PC-3 (cell line): ENCODE measurements at regions of chr2 and their contacts with region 1.

Region 1: DNA sequence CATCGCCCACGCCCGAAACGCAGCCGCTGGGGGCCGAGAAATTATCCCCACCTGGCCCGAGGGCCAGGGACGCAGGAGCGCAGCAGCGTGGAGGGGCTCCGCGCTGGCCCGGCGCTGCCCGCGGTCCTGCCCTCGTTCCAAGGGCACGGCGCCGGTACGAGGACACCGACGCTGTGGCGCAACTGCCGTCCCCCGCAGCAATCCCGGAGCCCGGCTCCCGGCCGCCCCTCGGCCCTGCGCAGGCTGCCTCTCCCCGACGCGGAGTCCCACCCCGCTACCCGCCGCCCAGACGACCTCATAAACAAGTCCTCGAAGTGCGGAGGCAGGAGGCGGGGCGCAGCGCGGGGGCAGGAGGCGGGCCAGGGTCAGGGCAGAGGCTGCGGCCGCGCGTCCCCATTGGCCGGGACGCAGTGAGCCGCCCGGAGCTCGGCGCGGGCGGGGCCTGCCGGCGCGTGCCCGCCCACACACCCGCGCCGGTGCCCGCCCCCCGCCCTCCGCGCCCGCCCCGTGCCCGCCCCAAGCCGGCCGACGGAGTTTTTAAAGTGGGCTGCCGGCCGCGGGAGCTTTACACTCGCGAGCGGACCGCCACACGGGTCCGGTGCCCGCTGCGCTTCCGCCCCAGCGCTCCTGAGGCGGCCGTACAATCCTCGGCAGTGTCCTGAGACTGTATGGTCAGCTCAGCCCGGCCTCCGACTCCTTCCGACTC is at the start of gene EPAS1:
- DNase-seq: peak; percentile 80
- ATAC-seq: peak; percentile 77
- H3K4me3 ChIP-seq: peak within 1 kb of the TSS; percentile 98
- H3K27ac ChIP-seq: peak within 1 kb of the TSS; percentile 72
- H3K4me1 ChIP-seq: peaks cover 9% of the 10 kb centered on the region
- H3K27me3 ChIP-seq: no peaks in the 10 kb centered on the region
- CTCF ChIP-seq: no peak
- total RNA-seq, gene EPAS1: 43.2 and 77.0 TPM in 2 replicates

Region 2: DNA sequence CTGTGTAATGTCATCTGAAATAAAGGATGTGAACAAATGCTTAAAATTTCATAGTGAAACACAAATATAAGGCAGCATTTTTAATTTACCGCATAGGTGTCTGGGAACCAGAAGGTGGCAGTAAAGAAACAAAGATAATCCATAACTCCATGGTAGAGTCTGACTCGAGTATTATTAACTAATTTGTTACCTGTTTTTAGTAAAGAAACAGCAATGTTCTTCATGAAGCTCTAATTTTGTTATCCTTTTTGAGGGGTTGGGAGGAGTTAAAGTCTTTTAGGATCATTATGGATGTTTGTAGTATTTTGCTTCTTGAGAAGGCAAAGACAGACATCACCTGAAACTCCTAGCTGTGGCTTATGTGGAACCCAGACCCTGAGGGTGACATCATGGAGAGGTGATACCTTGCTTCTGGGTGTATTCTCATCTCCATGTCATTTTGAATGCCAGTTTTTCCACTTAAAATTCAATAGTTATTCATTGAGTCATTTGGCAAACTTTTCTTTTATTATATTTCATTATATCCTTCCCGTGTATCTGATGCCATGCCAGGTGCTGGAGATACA is 286.0 kb before region 1 on chr2:
- CTCF ChIA-PET with region 1: interaction called, 3 read pairs
- POLR2A ChIA-PET with region 1: no interaction called
- intact Hi-C with region 1: loop called (anchors 2 kb)
- DNase-seq: peak; percentile 72
- ATAC-seq: peak; percentile 75
- H3K4me3 ChIP-seq: no peak overlapping the region
- H3K27ac ChIP-seq: peak overlapping the region; percentile 44
- H3K4me1 ChIP-seq: peaks cover 27% of the 10 kb centered on the region
- H3K27me3 ChIP-seq: no peaks in the 10 kb centered on the region
- CTCF ChIP-seq: peak; percentile 94

Region 3: DNA sequence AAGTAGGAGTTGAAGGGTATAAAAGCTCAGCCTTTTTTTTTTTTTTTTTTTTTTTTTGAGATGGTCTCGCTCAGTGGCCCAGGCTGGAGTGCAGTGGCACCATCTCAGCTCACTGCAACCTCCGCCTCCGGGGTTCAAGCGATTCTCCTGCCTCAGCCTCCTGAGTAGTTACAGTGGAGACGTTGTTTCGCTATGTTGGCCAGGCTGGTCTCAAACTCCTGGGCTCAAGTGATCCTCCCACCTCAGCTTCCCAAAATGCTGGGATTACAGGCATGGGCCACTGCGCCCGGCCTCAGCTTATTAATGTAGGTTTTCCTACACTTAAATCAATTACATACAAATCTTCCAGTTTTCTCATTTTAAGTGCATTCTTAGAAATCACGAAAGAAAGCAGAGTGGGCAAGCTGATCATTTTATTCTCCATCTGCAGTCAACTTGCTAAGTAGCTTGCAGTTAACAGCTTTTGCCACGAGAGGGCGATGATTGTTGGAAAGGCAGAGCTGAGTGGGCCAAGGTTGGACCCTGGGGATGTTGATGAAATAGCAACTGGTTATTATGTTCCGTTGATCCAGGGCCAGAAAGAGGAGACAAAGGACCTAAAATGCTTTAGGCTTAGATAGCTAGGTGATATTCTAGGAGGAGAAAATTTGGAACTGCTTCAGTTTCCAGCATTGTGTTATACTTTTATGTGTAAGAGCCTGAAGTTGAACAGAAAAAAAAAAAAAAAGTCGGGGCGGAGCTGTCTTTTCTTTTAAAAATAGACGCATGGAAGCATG is 234.2 kb before region 1 on chr2:
- CTCF ChIA-PET with region 1: interaction called, 8 read pairs
- POLR2A ChIA-PET with region 1: no interaction called
- intact Hi-C with region 1: loop called (anchors 1 kb)
- DNase-seq: peak; percentile 92
- ATAC-seq: peak; percentile 73
- H3K4me3 ChIP-seq: no peak overlapping the region
- H3K27ac ChIP-seq: no peak overlapping the region
- H3K4me1 ChIP-seq: peaks cover 19% of the 10 kb centered on the region; the same call in 1 of the 2 replicates
- H3K27me3 ChIP-seq: no peaks in the 10 kb centered on the region
- CTCF ChIP-seq: peak; percentile 92

Region 4: DNA sequence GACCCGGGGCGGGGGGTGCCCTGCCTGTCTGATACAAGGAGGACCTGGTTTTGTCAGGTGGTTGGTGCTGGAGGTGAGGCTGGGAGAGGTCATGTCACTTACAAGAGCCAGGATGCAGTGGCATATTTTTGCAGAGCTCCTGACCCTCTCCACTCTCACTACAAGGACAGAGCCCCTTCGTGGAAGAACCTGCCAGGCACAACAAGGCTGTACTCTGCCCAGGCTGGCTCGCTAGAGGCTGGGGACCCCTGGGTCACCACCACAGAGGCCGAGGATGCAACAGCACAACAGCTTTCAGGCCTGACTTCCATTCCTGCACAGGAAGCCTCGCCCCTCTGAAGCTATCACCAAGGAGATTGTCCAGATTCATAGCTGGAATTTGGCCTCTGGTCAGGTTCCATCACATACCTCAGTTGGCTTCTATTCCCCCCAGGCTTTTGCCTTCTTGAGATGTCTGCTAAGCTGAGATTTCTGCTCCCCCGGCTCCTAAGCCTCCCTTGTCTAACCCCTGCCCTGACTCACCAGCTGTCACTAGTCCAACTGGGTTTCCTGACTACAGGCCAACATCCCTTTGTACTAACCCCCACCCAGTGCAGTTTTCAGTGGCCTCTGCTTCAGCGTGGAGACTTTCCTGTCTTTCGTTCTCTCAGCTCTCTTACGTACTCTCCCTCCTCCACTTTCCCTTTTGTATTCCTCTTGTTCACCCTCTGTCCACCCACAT is 132.3 kb before region 1 on chr2:
- CTCF ChIA-PET with region 1: no interaction called
- POLR2A ChIA-PET with region 1: no interaction called
- intact Hi-C with region 1: loop called (anchors 1 kb)
- DNase-seq: peak; percentile 99
- ATAC-seq: peak; percentile 66
- H3K4me3 ChIP-seq: peak overlapping the region; percentile 41; the same call in 1 of the 2 replicates
- H3K27ac ChIP-seq: peak overlapping the region; percentile 95
- H3K4me1 ChIP-seq: peaks cover 35% of the 10 kb centered on the region
- H3K27me3 ChIP-seq: no peaks in the 10 kb centered on the region
- CTCF ChIP-seq: no peak

Region 5: DNA sequence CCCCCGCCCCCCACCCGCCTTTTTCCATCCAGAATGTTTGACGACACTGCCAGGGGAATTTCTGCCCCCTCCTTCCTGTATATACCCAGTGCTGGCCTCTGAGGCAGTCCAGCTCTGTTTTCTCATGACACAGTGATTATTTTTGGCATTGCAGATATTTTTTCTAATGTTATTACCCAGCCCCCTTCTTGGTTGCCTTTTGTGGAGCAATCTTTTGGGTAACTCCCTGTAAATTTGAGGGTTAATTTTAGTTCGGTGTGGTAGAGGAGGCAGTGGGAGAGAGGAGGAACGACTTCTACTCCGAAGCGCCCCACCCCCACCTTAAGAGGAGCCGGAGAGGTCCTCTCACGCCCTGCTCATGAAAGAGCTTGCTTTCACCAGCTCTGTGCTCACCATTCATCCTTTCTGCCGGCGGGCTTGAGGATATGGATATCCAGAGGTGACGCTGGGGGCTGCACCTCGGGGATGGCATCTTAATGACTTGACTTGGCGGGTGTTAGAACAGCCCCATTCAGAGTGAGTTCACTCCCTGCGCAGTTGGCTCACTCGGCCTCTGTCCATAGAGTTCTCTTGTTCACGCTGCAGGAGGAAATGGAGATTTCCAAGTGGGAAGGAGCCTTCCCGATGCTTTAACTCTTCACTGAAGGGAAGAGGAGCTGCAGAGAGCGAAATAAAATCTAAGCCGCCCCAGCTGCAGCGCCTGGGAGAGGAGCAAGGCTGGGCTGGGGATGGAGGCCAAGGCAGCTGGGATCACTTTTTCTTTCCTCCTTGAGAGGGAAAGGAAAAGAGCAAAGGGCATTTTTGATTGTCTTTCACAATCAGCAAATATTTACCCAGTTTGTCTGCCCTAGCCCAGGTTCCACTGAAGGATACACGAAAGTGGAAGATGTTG is 38.6 kb after region 1 on chr2:
- CTCF ChIA-PET with region 1: no interaction called
- POLR2A ChIA-PET with region 1: no interaction called
- intact Hi-C with region 1: loop called (anchors 2 kb)
- DNase-seq: peak; percentile 51
- ATAC-seq: peak; percentile 12; the same call in 1 of the 2 replicates
- H3K4me3 ChIP-seq: no peak overlapping the region
- H3K27ac ChIP-seq: peak overlapping the region; percentile 65
- H3K4me1 ChIP-seq: peaks cover 27% of the 10 kb centered on the region
- H3K27me3 ChIP-seq: no peaks in the 10 kb centered on the region
- CTCF ChIP-seq: no peak